Gastrocnemius medialis (tissue), 4 donors: ENCODE measurements at regions of chr2 and their contacts with region 1.

Region 1: DNA sequence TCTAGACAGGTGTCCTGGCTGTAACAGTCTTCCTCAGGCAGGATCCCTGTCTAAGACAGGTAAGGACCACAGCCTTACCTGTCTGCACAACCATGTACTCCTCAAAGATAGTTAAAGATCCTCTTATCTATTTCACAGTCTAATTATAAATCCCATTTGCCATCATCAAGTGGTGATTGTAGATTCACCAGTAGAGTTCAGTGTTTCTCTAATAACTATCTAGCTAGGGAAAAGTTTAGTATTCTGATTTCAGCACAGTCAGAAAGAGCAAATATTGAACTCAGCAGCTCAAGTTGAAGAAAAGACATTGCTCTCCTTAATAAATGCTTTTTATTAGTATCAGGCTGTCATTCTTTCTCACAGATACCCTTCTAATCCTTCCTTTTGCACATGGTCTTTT is 1305.5 kb upstream of the NXPH2 start:
- DNase-seq: no peak
- ATAC-seq: no peak
- H3K4me3 ChIP-seq: no peak overlapping the region
- H3K27ac ChIP-seq: no peak overlapping the region
- H3K4me1 ChIP-seq: no peaks in the 10 kb centered on the region
- H3K27me3 ChIP-seq: no peaks in the 10 kb centered on the region
- CTCF ChIP-seq: no peak
- POLR2A ChIP-seq: no peak

Region 2: GRCh38 chr2:139669675-139670074 is 416.0 kb before region 1 on chr2:
- in situ Hi-C with region 1: no loop called
- intact Hi-C with region 1: no loop called
- DNase-seq: no peak
- ATAC-seq: no peak
- H3K4me3 ChIP-seq: no peak overlapping the region
- H3K27ac ChIP-seq: no peak overlapping the region
- H3K4me1 ChIP-seq: no peaks in the 10 kb centered on the region
- H3K27me3 ChIP-seq: no peaks in the 10 kb centered on the region
- CTCF ChIP-seq: no peak
- POLR2A ChIP-seq: no peak

Region 3: DNA sequence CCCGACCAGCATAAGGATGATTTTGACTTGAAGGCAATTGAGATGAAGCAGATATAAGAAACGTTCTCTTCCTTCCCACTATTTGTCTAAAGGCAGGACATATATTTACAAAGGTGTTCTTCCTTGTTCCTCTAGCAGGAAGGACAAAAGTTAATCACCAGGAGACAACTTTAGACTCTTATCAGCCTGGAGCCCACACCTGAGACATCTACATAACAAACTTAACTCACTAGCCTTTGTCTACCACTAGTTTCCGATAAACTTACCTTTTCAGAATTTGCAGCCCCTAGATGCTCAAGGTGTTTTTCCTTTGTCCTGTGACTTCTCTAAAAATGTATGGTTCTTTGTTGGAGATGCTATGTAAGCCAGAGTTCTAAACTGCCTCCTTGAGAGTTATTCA is 257.7 kb before region 1 on chr2:
- in situ Hi-C with region 1: no loop called
- intact Hi-C with region 1: no loop called
- DNase-seq: no peak
- ATAC-seq: no peak
- H3K4me3 ChIP-seq: no peak overlapping the region
- H3K27ac ChIP-seq: no peak overlapping the region
- H3K4me1 ChIP-seq: no peaks in the 10 kb centered on the region
- H3K27me3 ChIP-seq: no peaks in the 10 kb centered on the region
- CTCF ChIP-seq: no peak
- POLR2A ChIP-seq: no peak

Region 4: GRCh38 chr2:140863713-140864112 is 778.0 kb after region 1 on chr2:
- in situ Hi-C with region 1: loop called in 1 of 4 experiments (anchors 25 kb)
- intact Hi-C with region 1: no loop called
- DNase-seq: no peak
- ATAC-seq: peak in 1 of 2 donors; percentile 39
- H3K4me3 ChIP-seq: no peak overlapping the region
- H3K27ac ChIP-seq: no peak overlapping the region
- H3K4me1 ChIP-seq: no peaks in the 10 kb centered on the region
- H3K27me3 ChIP-seq: no peaks in the 10 kb centered on the region
- CTCF ChIP-seq: peak; percentile 23 to 55 (median 45)
- POLR2A ChIP-seq: no peak